ENCODE measurements at regions of chr4 and their contacts with region 1.

Region 1: DNA sequence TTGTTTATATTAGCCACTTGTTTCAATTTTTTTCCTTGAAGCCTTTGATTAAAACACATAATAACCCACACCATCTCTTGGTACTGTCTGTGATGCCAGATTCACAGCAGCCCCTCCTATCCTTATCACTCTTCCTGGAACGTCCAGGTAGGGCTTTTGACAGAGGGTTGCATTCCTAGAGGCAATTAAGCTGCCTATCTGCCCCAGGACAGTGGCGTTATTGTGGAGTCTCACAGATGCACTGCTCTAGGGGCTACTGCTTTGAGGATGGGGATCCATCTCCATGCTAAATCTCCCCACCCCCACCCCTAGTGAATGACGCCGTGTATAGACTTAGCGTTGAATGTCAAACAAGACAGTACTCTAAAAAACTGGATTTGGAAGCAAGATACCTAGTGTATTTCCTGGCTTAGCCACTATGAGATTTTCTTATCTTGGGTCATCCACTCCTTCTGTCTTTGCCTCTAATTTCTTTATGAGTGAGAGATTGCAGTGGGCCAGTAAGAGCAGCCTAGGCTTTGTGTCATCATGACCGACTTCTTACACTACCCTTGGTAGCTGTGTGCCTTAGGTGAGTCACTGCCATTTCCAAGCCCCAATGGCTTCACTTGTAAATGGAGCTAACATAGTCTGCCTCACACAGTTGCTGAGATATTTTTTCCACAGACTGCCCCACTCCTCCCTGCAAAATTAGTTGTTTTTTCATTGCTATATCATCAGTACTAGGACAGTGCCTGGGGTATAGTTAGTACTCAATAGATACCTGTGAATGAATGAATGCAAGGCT is 90.9 kb downstream of the EGF start:
- DNase-seq: no peak
- H3K4me3 ChIP-seq: no peak overlapping the region
- H3K27ac ChIP-seq: no peak overlapping the region
- H3K4me1 ChIP-seq: peaks cover 0 to 3% of the 10 kb centered on the region in 2 donors
- H3K27me3 ChIP-seq: no peaks in the 10 kb centered on the region
- CTCF ChIP-seq: no peak
- POLR2A ChIP-seq: no peak

Region 2: GRCh38 chr4:109803924-109804571 is 199.5 kb before region 1 on chr4:
- intact Hi-C with region 1: no loop called
- DNase-seq: peak; percentile 6 to 17
- H3K4me3 ChIP-seq: no peak overlapping the region
- H3K27ac ChIP-seq: no peak overlapping the region
- H3K4me1 ChIP-seq: peaks cover 0 to 13% of the 10 kb centered on the region in 2 donors
- H3K27me3 ChIP-seq: no peaks in the 10 kb centered on the region
- CTCF ChIP-seq: peak in 4 of 6 experiments; percentile 17 to 48 (median 45)
- POLR2A ChIP-seq: no peak

Region 3: DNA sequence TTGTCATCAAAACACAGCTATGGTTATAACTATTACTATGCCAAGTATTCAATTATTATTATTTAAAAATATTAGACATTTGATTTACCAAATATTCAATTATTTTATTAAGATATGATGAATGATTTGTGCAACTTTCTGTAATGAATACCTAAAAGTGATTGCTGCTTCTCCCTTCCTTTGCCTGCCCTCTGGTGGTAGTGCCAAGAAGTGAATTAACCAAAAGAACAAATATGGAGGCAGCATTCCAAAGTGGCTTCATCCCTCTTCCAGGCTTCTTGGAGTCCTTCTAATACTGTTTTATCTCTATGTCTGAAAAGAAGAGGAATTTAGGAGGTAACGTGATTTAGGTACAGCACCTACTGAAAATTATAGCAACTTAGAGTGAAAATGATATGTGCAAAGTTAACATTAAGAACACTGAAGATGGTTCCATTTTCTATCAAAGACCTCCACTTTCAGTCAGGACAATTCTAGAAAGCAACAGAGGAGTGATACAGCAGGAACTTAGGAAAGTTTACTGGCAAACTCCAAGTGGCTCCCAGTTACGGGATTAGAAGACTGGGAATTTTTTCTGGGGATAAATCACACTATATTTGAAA is 515.4 kb after region 1 on chr4:
- intact Hi-C with region 1: loop called (anchors 2 kb)
- DNase-seq: peak; percentile 11 to 17
- H3K4me3 ChIP-seq: no peak overlapping the region
- H3K27ac ChIP-seq: no peak overlapping the region
- H3K4me1 ChIP-seq: no peaks in the 10 kb centered on the region
- H3K27me3 ChIP-seq: no peaks in the 10 kb centered on the region
- CTCF ChIP-seq: peak; percentile 15 to 74 (median 49)
- POLR2A ChIP-seq: no peak